ENCODE measurements at regions of chrX and their contacts with region 1.

Region 1: DNA sequence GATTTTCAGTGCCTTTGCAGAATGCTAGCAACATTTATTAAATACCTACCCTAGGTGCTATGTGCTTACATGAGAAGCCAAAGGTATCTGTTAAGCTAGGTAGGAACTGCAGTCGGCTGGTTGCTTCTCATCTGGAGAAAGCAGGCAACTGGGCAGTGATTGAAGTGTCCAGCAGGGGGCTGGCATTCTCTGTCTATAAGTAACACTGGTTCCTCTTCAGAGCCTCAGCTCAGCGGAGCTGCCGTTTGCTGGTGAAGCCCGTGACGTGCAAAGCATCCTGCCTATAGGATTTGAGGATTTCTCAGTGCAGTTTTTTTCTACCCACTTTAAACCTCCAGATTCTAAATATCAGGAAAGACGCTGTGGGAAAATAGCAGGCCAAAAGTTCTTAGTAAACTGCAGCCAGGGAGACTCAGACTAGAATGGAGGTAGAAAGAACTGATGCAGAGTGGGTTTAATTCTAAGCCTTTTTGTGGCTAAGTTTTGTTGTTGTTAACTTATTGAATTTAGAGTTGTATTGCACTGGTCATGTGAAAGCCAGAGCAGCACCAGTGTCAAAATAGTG is at the start of gene GRPR:
- H3K4me3 ChIP-seq: no peak within 1 kb of the TSS
- H3K27ac ChIP-seq: no peak within 1 kb of the TSS
- H3K4me1 ChIP-seq: no peaks in the 10 kb centered on the region
- CTCF ChIP-seq: 0 out of 2 replicates have a peak, but pooled peaks have one; percentile 21

Region 2: DNA sequence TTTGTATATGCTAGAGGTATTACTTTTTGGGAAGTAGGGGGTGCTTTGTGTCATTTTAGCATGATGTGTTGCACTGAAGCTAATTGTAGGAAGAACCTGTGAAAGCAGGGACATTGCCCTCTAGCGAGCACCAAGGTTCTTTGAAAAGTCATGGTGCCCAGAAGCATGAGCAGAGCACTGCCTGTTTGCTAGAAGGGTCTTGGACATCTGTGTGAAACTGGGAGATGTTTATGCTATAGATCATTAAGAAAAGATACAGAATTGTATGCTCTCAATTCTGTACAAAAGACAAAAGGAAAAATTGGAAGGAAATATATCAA is 14.8 kb after region 1 on chrX:
- CTCF ChIA-PET with region 1: interaction called, 10 read pairs
- POLR2A ChIA-PET with region 1: no interaction called
- H3K4me3 ChIP-seq: no peak overlapping the region
- H3K27ac ChIP-seq: no peak overlapping the region
- H3K4me1 ChIP-seq: no peaks in the 10 kb centered on the region
- CTCF ChIP-seq: no peak

Region 3: DNA sequence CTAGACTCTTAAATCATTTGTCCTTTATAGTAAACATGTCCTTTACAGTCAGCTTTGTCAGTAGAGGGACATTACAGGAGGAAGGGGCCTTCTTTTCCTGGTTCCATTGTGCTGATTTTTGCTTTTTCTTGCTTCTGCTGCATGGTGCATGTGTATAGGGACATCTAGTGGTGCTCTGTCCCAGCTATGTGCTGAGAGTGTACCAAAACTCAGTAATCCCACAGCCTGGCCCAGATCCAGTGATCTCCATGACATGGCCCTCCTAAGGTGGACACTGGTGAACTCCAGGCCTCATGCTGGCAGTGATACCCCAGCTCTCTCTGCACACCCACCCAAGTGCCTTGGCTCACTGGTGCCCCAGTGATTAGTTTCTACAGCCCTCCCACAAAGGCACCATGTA is 89.1 kb after region 1 on chrX:
- CTCF ChIA-PET with region 1: interaction called, 14 read pairs
- POLR2A ChIA-PET with region 1: no interaction called
- H3K4me3 ChIP-seq: no peak overlapping the region
- H3K27ac ChIP-seq: no peak overlapping the region
- H3K4me1 ChIP-seq: no peaks in the 10 kb centered on the region
- CTCF ChIP-seq: no peak